CD4-positive, alpha-beta T cell (primary cell): ENCODE measurements at regions of chr4 and their contacts with region 1.

Region 1: DNA sequence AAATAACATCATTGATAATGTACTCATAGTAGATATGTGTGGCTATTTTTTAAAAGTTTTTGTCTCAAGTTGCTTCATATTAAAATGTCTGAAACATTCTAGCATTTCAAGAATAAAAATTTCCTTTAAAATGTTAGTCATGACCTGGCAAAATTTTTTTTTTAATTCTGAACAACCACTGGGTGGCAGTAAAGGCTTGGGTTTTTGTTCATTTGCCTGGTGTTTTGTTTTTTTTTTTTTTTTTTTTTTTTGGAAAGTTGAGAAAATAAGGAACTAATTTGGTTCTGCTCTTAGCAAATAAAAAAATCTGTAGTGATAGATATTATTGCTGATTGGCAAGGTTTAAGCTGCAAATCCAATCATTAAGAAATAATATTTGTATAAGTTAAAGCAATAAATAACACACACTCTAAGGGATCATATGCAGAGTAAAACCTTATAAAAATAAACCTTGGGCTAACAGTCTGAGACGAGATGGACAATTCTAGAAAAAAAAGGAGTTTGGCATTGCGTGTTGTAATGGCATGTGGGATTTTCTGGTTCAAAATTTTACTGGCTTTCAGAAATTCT is 81.4 kb downstream of the CEP44 start:
- DNase-seq: peak in 4 of 14 experiments; percentile 12 to 56 (median 36)
- ATAC-seq: no peak
- H3K4me3 ChIP-seq: no peak overlapping the region
- H3K4me3 Mint-ChIP-seq: no peak overlapping the region
- H3K27ac ChIP-seq: no peak overlapping the region
- H3K27ac Mint-ChIP-seq: no peak overlapping the region
- H3K4me1 ChIP-seq: no peaks in the 10 kb centered on the region
- H3K4me1 Mint-ChIP-seq: no peaks in the 10 kb centered on the region
- H3K27me3 ChIP-seq: no peaks in the 10 kb centered on the region
- H3K27me3 Mint-ChIP-seq: peaks cover 9% of the 10 kb centered on the region
- CTCF ChIP-seq: peak; percentile 66

Region 2: DNA sequence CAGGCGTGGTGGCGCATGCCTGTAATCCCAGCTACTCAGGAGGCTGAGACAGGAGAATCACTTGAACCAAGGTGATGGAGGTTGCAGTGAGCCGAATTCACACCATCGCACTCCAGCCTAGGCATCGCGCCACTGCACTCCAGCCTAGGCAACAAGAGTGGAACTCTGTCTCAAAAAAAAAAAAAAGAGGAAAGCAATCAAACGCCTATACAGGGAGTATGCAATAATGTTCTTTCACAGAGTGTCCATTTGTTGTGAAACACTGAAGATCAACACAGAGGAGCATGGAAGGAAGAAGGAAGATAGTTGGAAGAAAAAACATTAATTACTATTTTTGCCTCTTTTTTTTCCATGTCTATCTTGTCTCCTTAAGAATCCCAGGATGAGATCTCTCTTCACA is 195.0 kb before region 1 on chr4:
- CTCF ChIA-PET with region 1: no interaction called
- POLR2A ChIA-PET with region 1: no interaction called
- intact Hi-C with region 1: no loop called
- DNase-seq: no peak
- ATAC-seq: no peak
- H3K4me3 ChIP-seq: no peak overlapping the region
- H3K4me3 Mint-ChIP-seq: no peak overlapping the region
- H3K27ac ChIP-seq: no peak overlapping the region
- H3K27ac Mint-ChIP-seq: no peak overlapping the region
- H3K4me1 ChIP-seq: no peaks in the 10 kb centered on the region
- H3K4me1 Mint-ChIP-seq: no peaks in the 10 kb centered on the region
- H3K27me3 ChIP-seq: peaks cover 0 to 4% of the 10 kb centered on the region in 2 experiments
- H3K27me3 Mint-ChIP-seq: peaks cover 19% of the 10 kb centered on the region
- CTCF ChIP-seq: no peak

Region 3: GRCh38 chr4:174402470-174403176 is 37.5 kb after region 1 on chr4:
- CTCF ChIA-PET with region 1: no interaction called
- POLR2A ChIA-PET with region 1: no interaction called
- intact Hi-C with region 1: no loop called
- DNase-seq: no peak
- ATAC-seq: no peak
- H3K4me3 ChIP-seq: no peak overlapping the region
- H3K4me3 Mint-ChIP-seq: no peak overlapping the region
- H3K27ac ChIP-seq: no peak overlapping the region
- H3K27ac Mint-ChIP-seq: no peak overlapping the region
- H3K4me1 ChIP-seq: no peaks in the 10 kb centered on the region
- H3K4me1 Mint-ChIP-seq: no peaks in the 10 kb centered on the region
- H3K27me3 ChIP-seq: no peaks in the 10 kb centered on the region
- H3K27me3 Mint-ChIP-seq: peaks cover 3% of the 10 kb centered on the region
- CTCF ChIP-seq: no peak

Region 4: GRCh38 chr4:174427666-174428065 is 62.6 kb after region 1 on chr4:
- CTCF ChIA-PET with region 1: no interaction called
- POLR2A ChIA-PET with region 1: no interaction called
- intact Hi-C with region 1: no loop called
- DNase-seq: no peak
- ATAC-seq: no peak
- H3K4me3 ChIP-seq: no peak overlapping the region
- H3K4me3 Mint-ChIP-seq: no peak overlapping the region
- H3K27ac ChIP-seq: no peak overlapping the region
- H3K27ac Mint-ChIP-seq: no peak overlapping the region
- H3K4me1 ChIP-seq: peaks cover 5% of the 10 kb centered on the region
- H3K4me1 Mint-ChIP-seq: peaks cover 8% of the 10 kb centered on the region
- H3K27me3 ChIP-seq: no peaks in the 10 kb centered on the region
- H3K27me3 Mint-ChIP-seq: no peaks in the 10 kb centered on the region
- CTCF ChIP-seq: no peak

Region 5: GRCh38 chr4:174631901-174632758 is 267.0 kb after region 1 on chr4:
- CTCF ChIA-PET with region 1: no interaction called
- POLR2A ChIA-PET with region 1: no interaction called
- intact Hi-C with region 1: loop called in 1 of 2 experiments (anchors 2 kb)
- DNase-seq: peak in 4 of 14 experiments; percentile 10 to 53 (median 39)
- ATAC-seq: no peak
- H3K4me3 ChIP-seq: no peak overlapping the region
- H3K4me3 Mint-ChIP-seq: no peak overlapping the region
- H3K27ac ChIP-seq: no peak overlapping the region
- H3K27ac Mint-ChIP-seq: no peak overlapping the region
- H3K4me1 ChIP-seq: no peaks in the 10 kb centered on the region
- H3K4me1 Mint-ChIP-seq: no peaks in the 10 kb centered on the region
- H3K27me3 ChIP-seq: no peaks in the 10 kb centered on the region
- H3K27me3 Mint-ChIP-seq: no peaks in the 10 kb centered on the region
- CTCF ChIP-seq: peak; percentile 29

Region 6: GRCh38 chr4:174716986-174717770 is 352.1 kb after region 1 on chr4:
- CTCF ChIA-PET with region 1: no interaction called
- POLR2A ChIA-PET with region 1: no interaction called
- intact Hi-C with region 1: loop called in 1 of 2 experiments (anchors 2 kb)
- DNase-seq: no peak
- ATAC-seq: no peak
- H3K4me3 ChIP-seq: no peak overlapping the region
- H3K4me3 Mint-ChIP-seq: no peak overlapping the region
- H3K27ac ChIP-seq: no peak overlapping the region
- H3K27ac Mint-ChIP-seq: no peak overlapping the region
- H3K4me1 ChIP-seq: no peaks in the 10 kb centered on the region
- H3K4me1 Mint-ChIP-seq: no peaks in the 10 kb centered on the region
- H3K27me3 ChIP-seq: peaks cover 0 to 5% of the 10 kb centered on the region in 2 experiments
- H3K27me3 Mint-ChIP-seq: peaks cover 5% of the 10 kb centered on the region
- CTCF ChIP-seq: no peak

Region 7: GRCh38 chr4:175536852-175537453 is 1171.8 kb after region 1 on chr4:
- CTCF ChIA-PET with region 1: no interaction called
- POLR2A ChIA-PET with region 1: no interaction called
- intact Hi-C with region 1: loop called in 1 of 2 experiments (anchors 5 kb)
- DNase-seq: no peak
- ATAC-seq: no peak
- H3K4me3 ChIP-seq: no peak overlapping the region
- H3K4me3 Mint-ChIP-seq: no peak overlapping the region
- H3K27ac ChIP-seq: no peak overlapping the region
- H3K27ac Mint-ChIP-seq: no peak overlapping the region
- H3K4me1 ChIP-seq: no peaks in the 10 kb centered on the region
- H3K4me1 Mint-ChIP-seq: no peaks in the 10 kb centered on the region
- H3K27me3 ChIP-seq: no peaks in the 10 kb centered on the region
- H3K27me3 Mint-ChIP-seq: no peaks in the 10 kb centered on the region
- CTCF ChIP-seq: no peak